ENCODE measurements at regions of chr2 and their contacts with region 1.

Region 1: GRCh38 chr2:223837287-223838061 is at the start of gene AP1S3:
- DNase-seq: peak; percentile 94
- ATAC-seq: peak; percentile 68
- H3K4me3 ChIP-seq: peak within 1 kb of the TSS; percentile 70 to 83 (median 73)
- H3K4me3 Mint-ChIP-seq: peak within 1 kb of the TSS; percentile 97
- H3K27ac ChIP-seq: peak within 1 kb of the TSS; percentile 93
- H3K27ac Mint-ChIP-seq: peak within 1 kb of the TSS; percentile 95
- H3K4me1 ChIP-seq: peaks cover 28 to 45% of the 10 kb centered on the region in 2 donors
- H3K4me1 Mint-ChIP-seq: peaks cover 53% of the 10 kb centered on the region
- H3K27me3 ChIP-seq: no peaks in the 10 kb centered on the region
- H3K27me3 Mint-ChIP-seq: no peaks in the 10 kb centered on the region
- CTCF ChIP-seq: no peak
- total RNA-seq, gene AP1S3: 41.4 and 50.7 TPM in 2 replicates

Region 2: GRCh38 chr2:223727562-223727961 is 109.9 kb before region 1 on chr2:
- CTCF ChIA-PET with region 1: interaction called, 3 read pairs
- POLR2A ChIA-PET with region 1: no interaction called
- intact Hi-C with region 1: loop called (anchors 1 kb)
- DNase-seq: peak; percentile 62
- ATAC-seq: peak; percentile 60
- H3K4me3 ChIP-seq: no peak overlapping the region
- H3K4me3 Mint-ChIP-seq: no peak overlapping the region
- H3K27ac ChIP-seq: no peak overlapping the region
- H3K27ac Mint-ChIP-seq: no peak overlapping the region
- H3K4me1 ChIP-seq: peaks cover 0 to 4% of the 10 kb centered on the region in 2 donors
- H3K4me1 Mint-ChIP-seq: peaks cover 6% of the 10 kb centered on the region
- H3K27me3 ChIP-seq: no peaks in the 10 kb centered on the region
- H3K27me3 Mint-ChIP-seq: no peaks in the 10 kb centered on the region
- CTCF ChIP-seq: peak; percentile 67

Region 3: GRCh38 chr2:223822818-223823217 is 14.7 kb before region 1 on chr2:
- CTCF ChIA-PET with region 1: interaction called, 4 read pairs
- POLR2A ChIA-PET with region 1: interaction called, 3 read pairs
- intact Hi-C with region 1: loop called (anchors 2 kb)
- DNase-seq: peak; percentile 62
- ATAC-seq: peak; percentile 70
- H3K4me3 ChIP-seq: no peak overlapping the region
- H3K4me3 Mint-ChIP-seq: peak overlapping the region; percentile 1
- H3K27ac ChIP-seq: peak overlapping the region; percentile 2 to 60
- H3K27ac Mint-ChIP-seq: peak overlapping the region; percentile 5
- H3K4me1 ChIP-seq: peaks cover 25 to 44% of the 10 kb centered on the region in 2 donors
- H3K4me1 Mint-ChIP-seq: peaks cover 57% of the 10 kb centered on the region
- H3K27me3 ChIP-seq: no peaks in the 10 kb centered on the region
- H3K27me3 Mint-ChIP-seq: no peaks in the 10 kb centered on the region
- CTCF ChIP-seq: no peak

Region 4: GRCh38 chr2:223957092-223957851 is 119.8 kb after region 1 on chr2 and contains the start of gene MRPL44:
- CTCF ChIA-PET with region 1: interaction called, 3 read pairs
- POLR2A ChIA-PET with region 1: no interaction called
- intact Hi-C with region 1: loop called (anchors 1 kb)
- DNase-seq: peak; percentile 96
- ATAC-seq: peak; percentile 99
- H3K4me3 ChIP-seq: peak within 1 kb of the TSS; percentile 66 to 94 (median 86)
- H3K4me3 Mint-ChIP-seq: peak within 1 kb of the TSS; percentile 94
- H3K27ac ChIP-seq: peak within 1 kb of the TSS; percentile 72 to 78
- H3K27ac Mint-ChIP-seq: peak within 1 kb of the TSS; percentile 97
- H3K4me1 ChIP-seq: peaks cover 48 to 52% of the 10 kb centered on the region in 2 donors
- H3K4me1 Mint-ChIP-seq: peaks cover 67% of the 10 kb centered on the region
- H3K27me3 ChIP-seq: no peaks in the 10 kb centered on the region
- H3K27me3 Mint-ChIP-seq: no peaks in the 10 kb centered on the region
- CTCF ChIP-seq: no peak
- total RNA-seq, gene MRPL44: 23.4 and 26.7 TPM in 2 replicates

Region 5: DNA sequence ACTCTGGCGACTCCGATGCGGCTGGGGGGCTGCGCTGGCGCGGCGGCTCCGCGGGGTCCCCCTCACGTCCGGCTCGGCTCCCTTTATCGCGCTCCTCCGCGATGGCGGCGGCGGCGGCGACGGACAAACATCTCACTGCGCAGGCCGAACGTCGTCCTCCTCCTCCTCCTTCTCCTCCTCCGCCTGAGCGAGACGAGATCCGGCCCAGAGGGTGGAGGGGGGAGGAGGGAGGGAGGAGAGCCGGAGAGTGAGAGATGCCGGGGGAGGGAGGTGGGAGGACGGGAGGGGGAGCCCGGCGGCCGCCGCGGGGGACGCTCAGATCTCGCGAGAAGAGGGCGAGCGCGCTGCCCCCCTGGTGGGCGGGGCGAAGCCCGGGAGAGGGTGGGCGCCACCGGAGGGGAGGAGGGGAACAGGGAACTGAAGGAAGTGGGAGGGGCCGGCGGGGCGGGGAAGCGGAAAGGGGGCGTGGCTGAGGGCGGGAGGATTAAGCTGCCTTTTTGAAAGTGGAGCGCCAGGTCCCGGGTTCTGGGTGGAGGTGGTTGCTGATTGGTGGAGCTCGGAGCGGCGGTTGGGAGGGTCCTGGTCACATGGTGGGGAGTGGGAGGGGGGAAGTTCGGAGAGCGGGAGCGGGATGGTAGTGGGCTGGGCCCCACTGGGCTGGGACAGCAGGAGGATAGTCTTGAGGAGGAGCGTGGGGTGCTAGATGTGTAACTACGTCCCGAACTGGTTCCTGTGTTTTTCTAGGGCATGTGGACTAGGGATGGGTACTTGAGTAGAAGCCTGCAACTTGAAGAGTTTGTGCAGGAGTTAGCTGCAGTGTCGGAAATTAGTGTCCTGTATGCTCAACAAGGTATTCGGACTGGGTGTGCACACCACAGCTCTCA is 748.0 kb after region 1 on chr2 and contains the start of gene CUL3:
- CTCF ChIA-PET with region 1: no interaction called
- POLR2A ChIA-PET with region 1: interaction called, 3 read pairs
- intact Hi-C with region 1: loop called (anchors 5 kb)
- DNase-seq: peak; percentile 99
- ATAC-seq: peak; percentile 87
- H3K4me3 ChIP-seq: peak within 1 kb of the TSS; percentile 79 to 95 (median 84)
- H3K4me3 Mint-ChIP-seq: peak within 1 kb of the TSS; percentile 98
- H3K27ac ChIP-seq: peak within 1 kb of the TSS; percentile 83
- H3K27ac Mint-ChIP-seq: peak within 1 kb of the TSS; percentile 96
- H3K4me1 ChIP-seq: peaks cover 31 to 40% of the 10 kb centered on the region in 2 donors
- H3K4me1 Mint-ChIP-seq: peaks cover 45% of the 10 kb centered on the region
- H3K27me3 ChIP-seq: no peaks in the 10 kb centered on the region
- H3K27me3 Mint-ChIP-seq: no peaks in the 10 kb centered on the region
- CTCF ChIP-seq: no peak
- total RNA-seq, gene CUL3: 138 and 142 TPM in 2 replicates